Activated B cell treated with CpG ODN at 0.5 μM for 24 hours (primary cell): ENCODE measurements at regions of chr15 and their contacts with region 1.

Region 1: DNA sequence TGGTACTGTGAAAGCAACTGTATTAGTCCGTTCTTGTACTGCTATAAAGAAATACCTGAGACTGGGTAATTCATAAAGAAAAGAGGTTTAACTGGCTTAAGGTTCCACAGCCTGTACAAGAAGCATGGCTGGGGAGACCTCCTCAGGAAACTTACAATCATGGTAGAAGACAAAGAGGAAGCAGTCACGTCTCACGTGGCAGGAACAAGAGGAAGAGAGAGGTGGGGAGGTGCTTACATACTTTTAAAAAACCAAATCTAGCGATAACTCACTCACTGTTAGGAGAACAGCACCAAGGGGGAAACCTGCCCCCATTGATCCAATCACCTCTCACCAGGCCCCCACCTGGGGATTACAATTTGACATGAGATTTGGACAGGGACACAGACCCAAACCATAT is 48.9 kb downstream of the IQGAP1 start:
- DNase-seq: no peak
- ATAC-seq: no peak
- H3K4me3 Mint-ChIP-seq: no peak overlapping the region
- H3K27ac Mint-ChIP-seq: no peak overlapping the region
- H3K4me1 Mint-ChIP-seq: peaks cover 5% of the 10 kb centered on the region
- H3K27me3 Mint-ChIP-seq: no peaks in the 10 kb centered on the region
- CTCF ChIP-seq: no peak

Region 2: GRCh38 chr15:89874926-89875564 is 561.9 kb before region 1 on chr15:
- CTCF ChIA-PET with region 1: no interaction called
- POLR2A ChIA-PET with region 1: no interaction called
- intact Hi-C with region 1: no loop called
- DNase-seq: peak; percentile 67
- ATAC-seq: peak; percentile 100
- H3K4me3 Mint-ChIP-seq: no peak overlapping the region
- H3K27ac Mint-ChIP-seq: no peak overlapping the region
- H3K4me1 Mint-ChIP-seq: peaks cover 2% of the 10 kb centered on the region
- H3K27me3 Mint-ChIP-seq: no peaks in the 10 kb centered on the region
- CTCF ChIP-seq: no peak

Region 3: DNA sequence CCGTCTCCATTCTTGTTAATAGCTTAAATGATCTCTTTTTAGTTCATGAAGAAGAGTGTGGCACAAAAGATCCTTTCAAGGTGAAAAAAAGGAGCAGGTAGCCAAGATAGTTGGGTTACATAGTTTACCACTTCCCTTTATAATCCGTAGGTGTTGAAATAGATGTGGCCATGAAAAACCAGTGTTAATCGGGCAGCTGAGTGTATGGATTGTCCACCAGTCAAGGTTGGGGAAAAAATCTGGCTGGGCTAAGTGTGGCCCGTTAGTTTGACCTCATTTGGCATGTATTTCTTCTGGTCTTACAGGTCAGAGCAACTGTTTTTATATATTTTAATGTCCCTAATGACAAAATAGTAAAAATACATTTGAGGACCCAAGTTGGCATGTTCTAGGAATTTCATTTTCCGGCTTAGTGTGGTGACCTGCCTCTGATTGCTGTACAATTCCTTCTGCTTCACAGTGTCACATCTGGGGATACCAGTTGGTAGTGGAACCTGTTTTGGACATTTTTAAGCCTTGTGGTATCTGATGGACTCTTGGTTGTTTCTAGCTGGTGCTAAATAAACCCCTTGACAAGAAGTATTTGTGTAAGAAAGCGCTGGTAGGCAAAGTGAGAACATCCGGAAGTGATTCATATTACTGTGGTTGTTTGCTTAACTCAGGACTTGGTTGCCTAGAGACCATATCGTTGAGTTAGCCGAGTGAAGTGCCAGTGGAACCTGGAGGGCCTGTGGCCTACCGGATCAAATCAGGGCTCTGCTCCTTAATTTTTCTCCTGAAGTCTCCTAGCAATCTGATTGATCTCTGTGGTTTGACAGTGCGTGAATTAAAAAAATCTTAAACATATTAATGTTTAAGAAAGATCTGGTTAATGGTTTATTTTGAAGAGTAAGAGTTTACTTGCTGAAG is 36.3 kb before region 1 on chr15:
- CTCF ChIA-PET with region 1: no interaction called
- POLR2A ChIA-PET with region 1: interaction called, 4 read pairs
- intact Hi-C with region 1: loop called (anchors 5 kb)
- DNase-seq: no peak
- ATAC-seq: peak; percentile 93
- H3K4me3 Mint-ChIP-seq: peak overlapping the region; percentile 73
- H3K27ac Mint-ChIP-seq: peak overlapping the region; percentile 96
- H3K4me1 Mint-ChIP-seq: peaks cover 63% of the 10 kb centered on the region
- H3K27me3 Mint-ChIP-seq: no peaks in the 10 kb centered on the region
- CTCF ChIP-seq: no peak

Region 4: GRCh38 chr15:90451053-90451850 is 14.3 kb after region 1 on chr15:
- CTCF ChIA-PET with region 1: no interaction called
- POLR2A ChIA-PET with region 1: no interaction called
- intact Hi-C with region 1: loop called (anchors 1 kb)
- DNase-seq: no peak
- ATAC-seq: no peak
- H3K4me3 Mint-ChIP-seq: no peak overlapping the region
- H3K27ac Mint-ChIP-seq: no peak overlapping the region
- H3K4me1 Mint-ChIP-seq: no peaks in the 10 kb centered on the region
- H3K27me3 Mint-ChIP-seq: no peaks in the 10 kb centered on the region
- CTCF ChIP-seq: no peak

Region 5: DNA sequence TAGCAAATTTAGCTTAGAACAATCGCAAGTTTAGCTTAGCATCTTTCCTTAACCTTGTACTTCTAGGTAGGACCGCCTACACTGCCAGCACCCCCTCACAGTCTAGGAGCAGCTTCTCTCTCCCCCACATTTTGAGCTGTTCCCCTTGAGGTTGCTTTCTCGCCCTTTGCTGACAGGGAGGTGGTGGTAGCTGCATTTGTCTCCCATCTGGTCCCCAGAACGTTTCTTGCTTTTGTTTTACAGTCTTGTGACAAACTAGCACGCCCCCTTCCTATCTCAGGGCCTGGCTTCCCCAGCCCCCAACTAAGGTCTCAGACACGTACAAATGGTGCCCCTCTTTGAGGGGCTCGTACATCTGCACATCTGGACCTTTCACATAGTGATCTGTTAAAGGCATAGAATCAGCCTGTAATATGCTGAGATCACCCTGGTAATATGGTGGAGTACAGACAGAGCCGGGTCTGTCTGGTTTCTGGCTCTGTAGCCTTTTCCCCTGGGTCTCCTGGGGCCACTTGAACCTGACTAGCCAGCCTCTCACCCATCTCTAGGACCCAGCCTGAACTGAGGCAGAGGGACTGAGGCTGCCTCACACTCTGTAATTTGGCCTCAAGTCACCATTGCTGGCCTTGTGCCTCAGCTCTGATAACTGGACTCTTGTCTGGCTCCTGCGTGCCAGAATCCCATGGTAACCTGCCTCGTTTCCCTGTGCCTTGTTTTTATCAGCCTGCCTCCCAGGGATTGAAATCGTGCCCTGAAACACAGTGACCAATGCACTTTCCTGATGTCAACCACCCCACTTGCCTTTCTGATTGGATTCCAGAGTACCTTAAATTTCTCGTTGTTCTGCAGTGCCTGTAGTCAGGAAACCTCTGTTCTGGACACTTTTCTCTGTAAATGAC is 120.5 kb after region 1 on chr15:
- CTCF ChIA-PET with region 1: no interaction called
- POLR2A ChIA-PET with region 1: no interaction called
- intact Hi-C with region 1: no loop called
- DNase-seq: no peak
- ATAC-seq: no peak
- H3K4me3 Mint-ChIP-seq: no peak overlapping the region
- H3K27ac Mint-ChIP-seq: peak overlapping the region; percentile 16
- H3K4me1 Mint-ChIP-seq: peaks cover 81% of the 10 kb centered on the region
- H3K27me3 Mint-ChIP-seq: no peaks in the 10 kb centered on the region
- CTCF ChIP-seq: no peak